CD4-positive, alpha-beta T cell (primary cell): ENCODE measurements at regions of chr7 and their contacts with region 1.

Region 1: GRCh38 chr7:100428199-100428966 is at the start of gene ZCWPW1:
- DNase-seq: peak; percentile 94 to 99 (median 97)
- ATAC-seq: peak; percentile 61
- H3K4me3 ChIP-seq: peak within 1 kb of the TSS; percentile 96
- H3K4me3 Mint-ChIP-seq: peak within 1 kb of the TSS; percentile 100
- H3K27ac ChIP-seq: peak within 1 kb of the TSS; percentile 100
- H3K27ac Mint-ChIP-seq: peak within 1 kb of the TSS; percentile 100
- H3K4me1 ChIP-seq: peaks cover 49% of the 10 kb centered on the region
- H3K4me1 Mint-ChIP-seq: peaks cover 40% of the 10 kb centered on the region
- H3K27me3 ChIP-seq: no peaks in the 10 kb centered on the region
- H3K27me3 Mint-ChIP-seq: peaks cover 11% of the 10 kb centered on the region
- CTCF ChIP-seq: no peak
- total RNA-seq, gene ZCWPW1: 4.4 to 6.5 TPM

Region 2: DNA sequence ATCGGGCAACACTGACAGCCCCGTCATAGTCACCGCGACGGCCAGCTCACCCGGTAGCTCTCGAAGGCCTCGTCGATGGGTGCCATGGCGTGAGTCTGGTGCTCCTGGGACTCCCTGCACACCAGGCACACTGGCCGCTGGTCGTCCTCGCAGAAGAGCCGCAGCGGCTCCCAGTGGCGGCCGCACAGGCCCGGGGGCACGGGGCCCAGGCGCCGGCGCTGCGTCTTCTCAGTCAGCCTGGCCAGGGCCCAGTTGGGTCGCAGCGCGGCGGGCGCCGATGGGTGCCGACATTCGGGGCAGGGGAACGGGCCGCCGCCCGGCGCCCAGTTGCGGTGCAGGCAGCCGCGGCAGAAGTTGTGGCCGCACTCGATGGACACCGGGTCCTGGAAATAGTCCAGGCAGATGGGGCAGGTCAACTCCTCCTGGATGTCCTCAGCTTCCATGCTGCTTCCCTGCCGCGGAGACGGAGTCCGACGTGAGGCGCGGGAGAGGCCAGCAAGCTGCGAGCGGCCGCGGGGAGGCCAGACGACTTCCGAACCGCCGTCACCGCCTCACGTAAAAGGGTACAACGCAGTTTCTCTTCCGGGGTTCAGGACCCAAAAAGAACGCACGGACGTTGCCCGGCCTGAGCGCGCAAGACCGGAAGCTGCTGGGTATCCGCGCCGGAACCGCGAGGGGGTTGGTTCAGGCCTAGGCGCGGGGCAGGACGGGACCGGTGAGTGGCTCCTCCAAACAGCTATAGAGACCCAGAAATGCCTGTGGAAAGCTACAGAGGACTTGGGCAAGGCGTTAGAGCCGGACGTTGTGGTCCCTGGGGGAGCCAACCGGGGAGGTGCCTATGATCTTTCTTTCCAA is 509.2 kb before region 1 on chr7 and contains the start of gene TRIM4:
- CTCF ChIA-PET with region 1: no interaction called
- POLR2A ChIA-PET with region 1: interaction called, 22 read pairs
- intact Hi-C with region 1: loop called in 1 of 2 experiments (anchors 5 kb)
- DNase-seq: peak; percentile 78 to 95 (median 86)
- ATAC-seq: peak; percentile 97
- H3K4me3 ChIP-seq: peak within 1 kb of the TSS; percentile 80
- H3K4me3 Mint-ChIP-seq: peak within 1 kb of the TSS; percentile 97
- H3K27ac ChIP-seq: peak within 1 kb of the TSS; percentile 78 to 80
- H3K27ac Mint-ChIP-seq: peak within 1 kb of the TSS; percentile 98
- H3K4me1 ChIP-seq: peaks cover 39% of the 10 kb centered on the region
- H3K4me1 Mint-ChIP-seq: peaks cover 61% of the 10 kb centered on the region
- H3K27me3 ChIP-seq: no peaks in the 10 kb centered on the region
- H3K27me3 Mint-ChIP-seq: no peaks in the 10 kb centered on the region
- CTCF ChIP-seq: peak; percentile 13
- total RNA-seq, gene TRIM4: 22.8 to 23.1 TPM

Region 3: DNA sequence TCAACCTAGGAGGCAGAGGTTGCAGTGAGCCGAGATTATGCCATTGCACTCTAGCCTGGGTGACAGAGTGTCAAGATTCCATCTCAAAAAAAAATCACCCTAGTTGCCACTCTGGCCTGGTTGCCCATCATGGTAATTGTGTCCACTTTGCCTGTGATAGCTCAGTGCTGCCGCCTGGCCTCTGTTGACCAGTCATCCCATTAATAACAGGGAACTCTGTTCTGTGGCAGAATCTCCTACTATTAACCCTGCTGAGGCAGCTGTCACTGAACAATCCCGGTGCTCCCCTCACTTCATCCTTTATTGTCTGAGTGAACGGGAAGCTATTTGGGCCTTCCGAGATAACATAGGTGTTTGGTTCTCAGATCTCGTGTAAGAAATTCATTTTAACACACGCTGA is 361.4 kb before region 1 on chr7:
- CTCF ChIA-PET with region 1: no interaction called
- POLR2A ChIA-PET with region 1: no interaction called
- intact Hi-C with region 1: no loop called
- DNase-seq: no peak
- ATAC-seq: no peak
- H3K4me3 ChIP-seq: no peak overlapping the region
- H3K4me3 Mint-ChIP-seq: no peak overlapping the region
- H3K27ac ChIP-seq: no peak overlapping the region
- H3K27ac Mint-ChIP-seq: no peak overlapping the region
- H3K4me1 ChIP-seq: no peaks in the 10 kb centered on the region
- H3K4me1 Mint-ChIP-seq: no peaks in the 10 kb centered on the region
- H3K27me3 ChIP-seq: no peaks in the 10 kb centered on the region
- H3K27me3 Mint-ChIP-seq: no peaks in the 10 kb centered on the region
- CTCF ChIP-seq: no peak

Region 4: GRCh38 chr7:100148559-100149350 is 279.6 kb before region 1 on chr7 and contains the start of gene LAMTOR4:
- CTCF ChIA-PET with region 1: no interaction called
- POLR2A ChIA-PET with region 1: interaction called, 18 read pairs
- intact Hi-C with region 1: no loop called
- DNase-seq: peak; percentile 94 to 100 (median 97)
- ATAC-seq: peak; percentile 95
- H3K4me3 ChIP-seq: peak within 1 kb of the TSS; percentile 99
- H3K4me3 Mint-ChIP-seq: peak within 1 kb of the TSS; percentile 92
- H3K27ac ChIP-seq: peak within 1 kb of the TSS; percentile 93 to 94
- H3K27ac Mint-ChIP-seq: peak within 1 kb of the TSS; percentile 95
- H3K4me1 ChIP-seq: peaks cover 41% of the 10 kb centered on the region
- H3K4me1 Mint-ChIP-seq: peaks cover 38% of the 10 kb centered on the region
- H3K27me3 ChIP-seq: no peaks in the 10 kb centered on the region
- H3K27me3 Mint-ChIP-seq: no peaks in the 10 kb centered on the region
- CTCF ChIP-seq: peak; percentile 9
- total RNA-seq, gene LAMTOR4: 107 to 125 TPM

Region 5: DNA sequence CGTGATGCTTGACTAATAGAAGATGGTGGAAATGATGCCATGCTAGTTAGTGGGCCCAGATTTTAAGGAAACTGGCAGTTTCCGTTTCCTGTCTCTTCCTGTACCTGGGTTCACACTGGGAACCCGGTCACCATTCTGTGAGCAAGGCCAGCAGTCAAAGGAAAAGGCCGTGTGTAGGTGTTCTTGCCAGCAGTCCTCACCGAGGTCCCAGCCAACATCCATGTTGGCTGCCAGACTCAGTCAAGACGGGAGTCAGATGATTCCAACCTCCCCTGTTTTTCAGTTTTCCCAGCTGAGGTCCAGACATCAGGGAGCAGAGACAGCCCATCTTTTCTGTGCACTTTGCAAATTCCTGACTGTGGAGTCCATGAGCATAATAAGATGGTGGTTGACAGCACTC is 85.6 kb before region 1 on chr7:
- CTCF ChIA-PET with region 1: interaction called, 3 read pairs
- POLR2A ChIA-PET with region 1: interaction called, 3 read pairs
- intact Hi-C with region 1: loop called in 1 of 2 experiments (anchors 5 kb)
- DNase-seq: peak in 1 of 14 experiments; percentile 9
- ATAC-seq: no peak
- H3K4me3 ChIP-seq: no peak overlapping the region
- H3K4me3 Mint-ChIP-seq: no peak overlapping the region
- H3K27ac ChIP-seq: no peak overlapping the region
- H3K27ac Mint-ChIP-seq: peak overlapping the region; percentile 78
- H3K4me1 ChIP-seq: peaks cover 18% of the 10 kb centered on the region
- H3K4me1 Mint-ChIP-seq: peaks cover 33% of the 10 kb centered on the region
- H3K27me3 ChIP-seq: no peaks in the 10 kb centered on the region
- H3K27me3 Mint-ChIP-seq: no peaks in the 10 kb centered on the region
- CTCF ChIP-seq: no peak

Region 6: DNA sequence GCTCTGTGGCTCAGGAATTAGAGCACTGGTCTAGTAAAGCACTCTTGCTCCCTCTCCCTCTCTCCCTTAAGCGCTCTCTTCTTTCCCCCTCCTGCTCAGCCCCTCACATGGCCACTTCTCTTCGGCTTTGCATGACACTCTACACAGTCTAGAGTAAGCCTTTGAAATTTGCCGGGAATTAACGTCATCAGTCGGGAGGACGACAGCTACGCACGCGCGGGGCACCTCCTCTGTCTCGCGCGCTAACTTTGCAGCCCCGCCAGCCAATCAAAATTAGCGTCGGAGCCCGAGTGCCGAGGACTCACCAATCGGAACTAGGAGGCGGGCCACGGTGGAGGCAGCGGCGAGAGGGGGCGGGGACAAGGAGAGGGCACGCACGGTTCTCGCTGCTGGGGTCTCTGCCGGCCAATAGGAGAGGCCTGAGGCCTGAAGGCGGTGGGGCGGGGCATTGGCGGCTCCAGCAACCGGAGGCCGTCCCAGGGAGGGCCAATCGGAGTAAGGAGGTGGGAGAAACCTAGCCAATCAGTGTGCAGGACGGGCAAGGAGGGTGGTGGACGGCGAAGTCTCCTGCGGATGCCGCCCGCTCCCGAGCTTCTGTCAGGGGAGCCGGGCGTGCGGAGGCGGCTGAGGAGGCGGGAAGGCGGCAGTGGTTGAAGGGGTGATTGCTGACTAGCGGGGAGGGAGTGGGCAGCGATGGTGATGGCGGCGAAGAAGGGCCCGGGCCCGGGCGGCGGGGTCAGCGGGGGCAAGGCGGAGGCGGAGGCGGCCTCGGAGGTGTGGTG is 110.5 kb after region 1 on chr7 and contains the start of gene AGFG2:
- CTCF ChIA-PET with region 1: no interaction called
- POLR2A ChIA-PET with region 1: interaction called, 14 read pairs
- intact Hi-C with region 1: no loop called
- DNase-seq: peak; percentile 100
- ATAC-seq: peak; percentile 94
- H3K4me3 ChIP-seq: peak within 1 kb of the TSS; percentile 73
- H3K4me3 Mint-ChIP-seq: peak within 1 kb of the TSS; percentile 99
- H3K27ac ChIP-seq: peak within 1 kb of the TSS in 1 of 2 donors; percentile 41
- H3K27ac Mint-ChIP-seq: peak within 1 kb of the TSS; percentile 77
- H3K4me1 ChIP-seq: peaks cover 44% of the 10 kb centered on the region
- H3K4me1 Mint-ChIP-seq: peaks cover 48% of the 10 kb centered on the region
- H3K27me3 ChIP-seq: no peaks in the 10 kb centered on the region
- H3K27me3 Mint-ChIP-seq: no peaks in the 10 kb centered on the region
- CTCF ChIP-seq: no peak
- total RNA-seq, gene AGFG2: 6.6 to 9.9 TPM

Region 7: DNA sequence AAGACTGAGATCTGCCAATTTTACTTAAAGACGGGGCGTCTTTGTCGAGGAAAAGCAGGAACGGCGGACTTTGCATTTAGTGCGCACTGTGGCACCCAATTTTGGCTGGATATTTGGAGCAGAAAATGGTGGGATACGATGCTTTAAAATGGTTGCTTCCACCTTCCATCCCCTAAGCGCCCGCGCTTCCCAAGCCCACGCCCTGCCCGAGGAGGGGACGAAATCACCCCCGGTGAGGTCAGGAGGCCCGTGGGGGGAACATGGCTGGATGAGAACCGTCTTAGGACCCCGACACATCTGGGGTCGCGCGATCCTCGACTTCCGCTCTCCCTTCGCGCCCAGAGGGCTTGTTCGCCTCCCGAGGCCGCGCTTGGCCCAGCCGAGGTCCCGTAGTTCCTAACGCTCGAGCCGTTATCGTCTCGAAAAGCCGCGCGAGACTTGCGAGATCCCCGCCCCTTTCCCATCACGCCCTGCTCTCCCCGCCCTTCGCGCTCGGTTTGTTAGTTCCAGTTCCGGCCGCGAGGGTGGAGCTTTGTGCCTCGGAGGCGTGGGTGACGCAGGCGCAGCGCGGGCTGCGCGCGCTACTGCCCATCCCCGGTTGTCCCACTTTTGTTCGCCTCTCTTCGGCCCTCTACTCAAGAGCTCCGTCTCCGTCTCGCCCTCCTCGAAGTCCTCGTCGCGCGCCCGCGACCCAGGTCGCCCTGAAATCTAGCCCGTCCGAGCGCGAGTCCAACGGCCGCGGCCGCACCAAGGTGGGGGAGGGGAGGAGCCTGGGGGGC is 446.4 kb after region 1 on chr7 and contains the start of gene SRRT:
- CTCF ChIA-PET with region 1: no interaction called
- POLR2A ChIA-PET with region 1: interaction called, 18 read pairs
- intact Hi-C with region 1: no loop called
- DNase-seq: peak; percentile 98 to 99 (median 98)
- ATAC-seq: peak; percentile 95
- H3K4me3 ChIP-seq: peak within 1 kb of the TSS; percentile 96
- H3K4me3 Mint-ChIP-seq: peak within 1 kb of the TSS; percentile 100
- H3K27ac ChIP-seq: peak within 1 kb of the TSS; percentile 91
- H3K27ac Mint-ChIP-seq: peak within 1 kb of the TSS; percentile 96
- H3K4me1 ChIP-seq: peaks cover 48% of the 10 kb centered on the region
- H3K4me1 Mint-ChIP-seq: peaks cover 49% of the 10 kb centered on the region
- H3K27me3 ChIP-seq: no peaks in the 10 kb centered on the region
- H3K27me3 Mint-ChIP-seq: no peaks in the 10 kb centered on the region
- CTCF ChIP-seq: no peak
- total RNA-seq, gene SRRT: 355 to 382 TPM